ENCODE measurements at regions of chr2 and their contacts with region 1.

Region 1: DNA sequence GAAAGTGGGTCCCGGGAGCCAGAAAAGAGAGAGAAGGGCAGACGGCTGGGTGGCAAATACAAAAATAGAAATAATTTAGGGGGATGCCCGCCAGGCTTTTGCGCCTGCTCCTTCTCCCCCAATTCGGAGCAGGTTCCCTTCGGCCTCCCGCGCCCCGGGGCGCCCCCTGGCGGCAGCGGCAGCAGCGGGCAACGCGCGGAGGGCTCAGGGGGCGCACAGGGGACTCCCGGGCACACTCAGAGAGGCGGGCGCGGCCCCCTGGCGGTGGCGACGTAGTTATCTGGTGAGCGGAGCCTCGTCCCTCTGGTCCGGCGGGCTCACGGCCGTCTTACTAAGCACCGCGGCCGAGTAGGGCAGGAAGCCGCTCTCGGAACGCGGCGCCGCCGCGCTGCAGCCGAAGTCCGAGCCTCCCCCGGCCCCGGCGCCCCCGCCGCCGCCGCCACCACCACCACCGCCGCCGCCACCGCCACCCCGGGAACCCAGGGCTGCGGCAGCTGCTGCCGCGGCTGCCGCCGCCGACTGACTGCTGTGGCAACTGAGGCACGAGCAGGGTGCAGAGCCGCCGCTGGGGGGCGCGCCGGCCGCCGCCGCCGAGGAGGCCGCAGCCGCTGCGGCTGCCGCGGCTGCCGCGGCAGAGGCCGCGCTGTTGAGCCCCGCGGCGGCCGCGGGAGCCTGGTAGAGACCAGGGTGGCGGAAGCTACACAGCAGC is 3.8 kb downstream of the EVX2 start:
- DNase-seq: peak; percentile 59
- H3K27ac ChIP-seq: no peak overlapping the region
- CTCF ChIP-seq: peak; percentile 75

Region 2: DNA sequence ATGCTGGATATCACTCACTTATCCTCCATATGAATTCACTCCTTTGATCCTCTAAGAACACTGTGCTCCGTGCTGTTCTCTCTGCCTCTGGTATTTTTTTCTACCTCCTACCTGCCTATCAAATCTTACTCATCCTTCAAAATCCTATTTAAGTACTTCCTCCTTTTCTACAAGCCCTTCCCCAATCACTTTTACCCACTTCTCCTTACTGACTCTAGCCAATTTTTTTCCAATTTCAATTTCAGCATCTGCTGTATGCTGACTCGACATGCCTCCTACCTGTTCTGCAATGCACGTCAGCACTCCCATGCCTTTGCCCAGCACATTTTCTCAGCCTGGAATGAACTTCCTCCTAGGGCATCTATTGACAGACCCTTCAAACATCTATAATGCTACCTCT is 40.6 kb before region 1 on chr2:
- CTCF ChIA-PET with region 1: no interaction called
- POLR2A ChIA-PET with region 1: no interaction called
- DNase-seq: no peak
- H3K27ac ChIP-seq: no peak overlapping the region
- CTCF ChIP-seq: no peak

Region 3: DNA sequence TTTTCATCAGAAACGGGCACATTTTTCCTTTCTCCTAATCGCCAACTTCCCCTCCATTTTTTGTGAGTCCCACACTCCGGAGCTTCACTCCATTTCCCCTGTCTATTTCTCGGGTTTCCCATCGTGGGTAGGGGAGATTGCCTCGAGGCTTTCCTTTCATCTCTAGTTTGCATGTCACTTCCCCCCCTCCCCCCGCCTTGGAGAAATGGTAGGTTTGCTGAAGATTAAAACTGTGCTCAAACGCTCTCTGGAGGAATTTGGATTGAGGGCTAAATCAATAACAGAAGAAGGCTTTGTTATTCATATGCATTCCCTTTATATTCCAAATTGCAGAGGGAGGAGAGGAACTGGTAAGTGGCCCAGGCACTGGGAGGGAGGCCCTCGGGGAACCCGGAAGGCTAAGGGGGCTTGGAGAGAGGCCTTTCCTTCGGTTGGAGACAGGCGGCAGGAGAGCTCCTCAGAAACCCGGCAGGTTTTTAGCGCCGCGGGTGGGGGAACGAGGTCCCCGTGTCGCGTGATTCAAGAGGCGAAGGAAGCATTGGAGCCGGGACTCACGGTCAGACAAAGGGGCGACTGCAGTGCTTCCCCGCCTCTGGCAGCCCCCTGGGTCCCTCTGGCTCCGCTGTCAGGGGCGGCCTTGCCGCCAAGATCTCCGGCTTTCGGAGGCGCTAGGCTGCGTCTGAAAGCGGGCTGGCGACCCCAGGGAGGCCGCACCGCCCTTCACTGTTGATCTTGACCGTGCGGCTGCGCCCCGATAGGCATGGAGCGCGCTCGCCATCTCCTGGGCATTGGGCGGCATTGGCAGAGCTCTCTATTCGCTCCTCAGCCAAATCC is 17.2 kb after region 1 on chr2:
- CTCF ChIA-PET with region 1: interaction called, 16 read pairs
- POLR2A ChIA-PET with region 1: no interaction called
- DNase-seq: peak; percentile 71
- H3K27ac ChIP-seq: peak overlapping the region; percentile 68
- CTCF ChIP-seq: peak; percentile 91